ENCODE measurements at regions of chr12 and their contacts with region 1.

Region 1: DNA sequence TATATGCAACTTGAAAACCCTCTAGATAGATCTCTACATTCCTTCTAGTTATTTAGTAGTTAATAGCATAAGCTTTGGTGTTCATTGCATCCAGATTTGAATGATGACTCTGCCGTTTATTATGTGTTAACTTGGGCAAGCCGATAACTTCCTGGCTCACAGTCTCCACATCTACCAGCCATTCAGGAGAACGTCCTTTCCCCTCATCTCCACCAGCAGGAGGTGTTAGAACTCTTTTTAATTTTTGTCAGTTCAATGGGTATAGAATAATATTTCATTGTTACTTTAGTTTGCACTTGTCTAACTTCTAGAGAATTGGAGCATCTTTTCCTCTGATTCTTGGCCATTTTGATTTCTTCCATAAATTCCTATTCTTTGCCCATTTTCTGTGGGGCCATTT is 30.0 kb upstream of the WSCD2 start:
- DNase-seq: no peak
- ATAC-seq: peak; percentile 47
- H3K4me3 Mint-ChIP-seq: no peak overlapping the region
- H3K27ac Mint-ChIP-seq: no peak overlapping the region
- H3K4me1 Mint-ChIP-seq: no peaks in the 10 kb centered on the region
- H3K27me3 Mint-ChIP-seq: peaks cover 5% of the 10 kb centered on the region
- CTCF ChIP-seq: no peak

Region 2: GRCh38 chr12:107903341-107904061 is 195.6 kb before region 1 on chr12:
- CTCF ChIA-PET with region 1: no interaction called
- POLR2A ChIA-PET with region 1: no interaction called
- intact Hi-C with region 1: no loop called
- DNase-seq: peak; percentile 64
- ATAC-seq: peak; percentile 99
- H3K4me3 Mint-ChIP-seq: peak overlapping the region; percentile 81
- H3K27ac Mint-ChIP-seq: peak overlapping the region; percentile 66
- H3K4me1 Mint-ChIP-seq: peaks cover 12% of the 10 kb centered on the region
- H3K27me3 Mint-ChIP-seq: peaks cover 27% of the 10 kb centered on the region
- CTCF ChIP-seq: no peak

Region 3: GRCh38 chr12:108119126-108119976 is 20.3 kb after region 1 on chr12:
- CTCF ChIA-PET with region 1: no interaction called
- POLR2A ChIA-PET with region 1: no interaction called
- intact Hi-C with region 1: loop called (anchors 1 kb)
- DNase-seq: no peak
- ATAC-seq: peak; percentile 77
- H3K4me3 Mint-ChIP-seq: peak overlapping the region; percentile 53
- H3K27ac Mint-ChIP-seq: peak overlapping the region; percentile 92
- H3K4me1 Mint-ChIP-seq: peaks cover 57% of the 10 kb centered on the region
- H3K27me3 Mint-ChIP-seq: no peaks in the 10 kb centered on the region
- CTCF ChIP-seq: no peak

Region 4: DNA sequence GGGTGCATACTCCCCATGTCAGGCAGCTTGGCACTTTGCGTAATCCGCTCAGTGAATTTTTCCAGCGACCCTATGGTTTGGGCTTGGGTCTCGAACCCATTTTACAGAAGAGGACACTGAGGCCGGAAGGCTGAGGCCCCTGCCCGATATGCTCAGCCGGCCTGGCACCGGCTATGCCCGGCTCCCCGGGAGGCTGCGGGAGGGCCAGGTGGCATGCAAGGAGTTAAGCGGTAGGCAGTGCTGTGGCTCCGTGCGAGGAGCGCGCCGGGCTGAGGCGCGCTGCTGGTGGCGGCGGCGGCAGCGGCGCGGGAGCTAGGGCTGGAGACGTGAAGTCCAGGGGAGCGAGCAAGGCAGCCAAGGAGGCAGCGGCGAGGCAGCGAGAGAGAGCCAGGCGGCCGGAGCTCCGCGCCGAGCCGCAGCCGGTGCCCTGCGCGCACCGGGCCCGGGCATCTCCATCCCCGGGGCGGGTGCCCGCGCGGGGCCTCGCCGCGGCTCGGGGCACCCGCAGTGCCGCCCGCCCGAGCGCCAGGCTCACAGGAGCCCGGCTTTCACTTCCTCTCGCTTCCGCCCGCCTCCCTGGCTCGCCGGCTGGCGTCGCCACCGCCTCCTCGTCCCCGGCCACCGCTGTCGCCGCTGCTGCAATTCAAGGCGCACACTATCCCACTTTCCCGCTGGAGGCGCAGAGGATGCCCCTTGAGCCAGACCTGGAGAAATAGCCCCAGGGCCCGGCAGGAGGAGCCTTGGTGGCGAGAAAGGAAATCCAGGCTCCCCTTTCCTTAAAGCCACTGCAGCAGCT is 30.1 kb after region 1 on chr12 and contains the start of gene WSCD2:
- CTCF ChIA-PET with region 1: no interaction called
- POLR2A ChIA-PET with region 1: interaction called, 3 read pairs
- intact Hi-C with region 1: loop called (anchors 1 kb)
- DNase-seq: peak; percentile 39
- ATAC-seq: peak; percentile 89
- H3K4me3 Mint-ChIP-seq: peak within 1 kb of the TSS; percentile 77
- H3K27ac Mint-ChIP-seq: no peak within 1 kb of the TSS
- H3K4me1 Mint-ChIP-seq: peaks cover 14% of the 10 kb centered on the region
- H3K27me3 Mint-ChIP-seq: peaks cover 29% of the 10 kb centered on the region
- CTCF ChIP-seq: no peak
- total RNA-seq, gene WSCD2: 1.4 and 1.9 TPM in 2 replicates

Region 5: GRCh38 chr12:108193917-108194316 is 94.8 kb after region 1 on chr12:
- CTCF ChIA-PET with region 1: interaction called, 4 read pairs
- POLR2A ChIA-PET with region 1: no interaction called
- intact Hi-C with region 1: loop called (anchors 1 kb)
- DNase-seq: no peak
- ATAC-seq: peak; percentile 66
- H3K4me3 Mint-ChIP-seq: no peak overlapping the region
- H3K27ac Mint-ChIP-seq: no peak overlapping the region
- H3K4me1 Mint-ChIP-seq: peaks cover 13% of the 10 kb centered on the region
- H3K27me3 Mint-ChIP-seq: no peaks in the 10 kb centered on the region
- CTCF ChIP-seq: no peak

Region 6: DNA sequence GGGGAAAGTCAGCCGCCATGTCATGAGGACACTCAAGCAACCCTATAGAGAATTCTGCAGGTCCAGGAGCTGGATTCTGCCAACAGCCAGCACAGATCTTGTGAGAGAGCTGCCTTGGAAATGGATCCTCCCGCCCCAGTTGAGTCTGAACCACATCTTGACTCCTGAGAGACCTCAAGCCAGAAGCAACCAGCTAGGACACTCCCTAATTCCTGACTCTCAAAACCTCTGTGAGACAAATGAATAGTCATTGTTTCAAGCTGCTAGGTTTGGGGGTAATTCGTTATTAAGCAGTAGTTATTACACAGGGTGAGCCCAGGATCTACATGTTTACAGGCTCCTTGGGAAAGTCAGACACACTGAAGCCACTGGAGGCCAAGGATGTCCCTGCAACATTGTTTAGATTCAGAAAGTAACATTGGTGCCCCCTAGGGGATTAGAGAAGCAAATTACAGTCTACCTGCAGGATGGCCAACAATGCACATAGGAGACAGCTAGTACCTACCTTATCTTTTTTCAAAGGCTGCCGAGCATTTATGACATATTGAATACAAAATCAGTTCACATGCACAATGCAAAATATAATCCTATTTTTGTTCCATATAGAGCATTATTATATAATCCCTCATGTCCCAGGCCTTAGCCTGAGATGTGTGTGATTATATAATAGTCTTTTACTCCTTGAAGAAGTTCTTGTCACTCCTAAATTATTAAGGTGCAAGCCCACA is 358.1 kb after region 1 on chr12:
- CTCF ChIA-PET with region 1: interaction called, 6 read pairs
- POLR2A ChIA-PET with region 1: no interaction called
- intact Hi-C with region 1: loop called (anchors 1 kb)
- DNase-seq: no peak
- ATAC-seq: no peak
- H3K4me3 Mint-ChIP-seq: no peak overlapping the region
- H3K27ac Mint-ChIP-seq: no peak overlapping the region
- H3K4me1 Mint-ChIP-seq: no peaks in the 10 kb centered on the region
- H3K27me3 Mint-ChIP-seq: peaks cover 11% of the 10 kb centered on the region
- CTCF ChIP-seq: no peak

Measured in activated B cell treated with CpG ODN at 0.5 μM for 24 hours (primary cell).